ENCODE measurements at regions of chr2 and their contacts with region 1.

Region 1: DNA sequence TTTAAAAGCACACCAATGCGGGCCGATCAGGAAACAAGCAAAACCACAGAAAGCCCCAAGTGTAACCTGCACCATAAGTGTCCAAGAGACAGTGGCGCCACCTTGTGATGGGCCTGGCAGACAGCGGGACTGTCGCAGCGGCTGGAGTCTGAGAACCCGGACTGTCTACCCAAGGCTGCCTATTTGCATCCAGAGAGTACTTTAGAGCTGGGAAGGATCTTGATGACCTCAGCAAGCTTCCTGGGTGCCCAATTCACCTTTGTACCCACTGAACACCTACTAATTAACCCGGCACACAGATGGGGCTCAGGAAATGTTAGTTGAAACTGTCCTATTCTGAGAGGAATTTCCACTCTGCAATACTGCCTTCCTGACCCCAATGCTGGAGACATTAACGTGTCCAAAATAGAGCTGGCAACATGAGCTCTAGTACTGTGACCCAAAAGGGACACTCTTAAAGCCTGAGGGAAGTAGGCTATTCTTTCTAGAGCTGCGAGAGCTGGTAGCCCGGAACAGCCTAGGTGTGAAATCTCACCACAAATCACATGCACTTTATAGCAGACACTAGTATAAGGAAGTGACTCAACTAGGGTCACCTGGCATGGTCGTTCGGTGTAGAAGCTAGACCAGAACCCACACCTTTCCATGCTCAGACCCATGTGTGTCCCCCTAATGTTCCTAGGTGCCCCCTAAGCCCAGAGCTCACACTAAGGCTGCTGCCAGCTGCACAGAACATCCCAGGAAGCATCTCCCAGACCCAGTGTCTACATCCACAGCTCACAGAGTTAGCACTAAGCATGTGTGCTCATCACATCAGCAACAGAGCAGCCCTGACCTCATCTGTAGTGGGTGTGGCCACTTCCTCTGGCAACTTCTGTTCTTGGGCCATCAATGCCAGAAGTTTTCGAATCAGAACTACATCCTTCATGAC is 25.4 kb downstream of the POLR1A start:
- DNase-seq: peak; percentile 83
- H3K4me3 ChIP-seq: no peak overlapping the region
- H3K27ac ChIP-seq: no peak overlapping the region
- H3K4me1 ChIP-seq: peaks cover 6% of the 10 kb centered on the region
- H3K27me3 ChIP-seq: no peaks in the 10 kb centered on the region
- CTCF ChIP-seq: peak; percentile 81

Region 2: DNA sequence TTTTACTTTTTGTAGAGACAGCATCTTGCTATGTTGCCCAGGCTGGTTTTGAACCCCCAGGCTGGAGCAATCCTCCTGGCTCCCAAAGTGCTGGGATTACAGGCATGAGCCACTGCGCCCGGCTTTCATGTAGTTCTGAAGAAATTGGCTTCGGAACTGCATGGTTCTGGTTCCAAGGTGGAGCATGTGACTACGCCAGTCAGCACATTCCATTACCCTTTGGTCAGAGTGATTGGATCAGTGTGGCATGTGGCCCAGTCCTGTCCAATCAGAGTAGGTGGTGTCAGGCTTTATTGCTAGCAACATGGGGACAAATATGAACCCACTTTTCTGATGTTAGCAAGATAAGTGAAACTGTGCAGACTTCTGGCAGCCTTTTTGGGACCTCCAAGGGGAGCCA is 342.8 kb before region 1 on chr2:
- intact Hi-C with region 1: loop called (anchors 10 kb)
- DNase-seq: peak; percentile 65
- H3K4me3 ChIP-seq: no peak overlapping the region
- H3K27ac ChIP-seq: no peak overlapping the region
- H3K4me1 ChIP-seq: peaks cover 4% of the 10 kb centered on the region
- H3K27me3 ChIP-seq: no peaks in the 10 kb centered on the region
- CTCF ChIP-seq: no peak

Region 3: GRCh38 chr2:85826990-85827878 is 253.0 kb before region 1 on chr2:
- intact Hi-C with region 1: loop called (anchors 2 kb)
- DNase-seq: peak; percentile 72
- H3K4me3 ChIP-seq: no peak overlapping the region
- H3K27ac ChIP-seq: no peak overlapping the region
- H3K4me1 ChIP-seq: no peaks in the 10 kb centered on the region
- H3K27me3 ChIP-seq: no peaks in the 10 kb centered on the region
- CTCF ChIP-seq: peak; percentile 87

Region 4: GRCh38 chr2:85888684-85889626 is 191.3 kb before region 1 on chr2 and contains the start of gene ST3GAL5:
- intact Hi-C with region 1: loop called (anchors 5 kb)
- DNase-seq: peak; percentile 93
- H3K4me3 ChIP-seq: peak within 1 kb of the TSS; percentile 69
- H3K27ac ChIP-seq: peak within 1 kb of the TSS; percentile 78
- H3K4me1 ChIP-seq: peaks cover 5% of the 10 kb centered on the region
- H3K27me3 ChIP-seq: peaks cover 8% of the 10 kb centered on the region
- CTCF ChIP-seq: peak; percentile 48
- total RNA-seq, gene ST3GAL5: 2.6 to 3.5 TPM

Measured in colonic mucosa (tissue), 4 donors.